PC-9 (cell line): ENCODE measurements at regions of chr7 and their contacts with region 1.

Region 1: GRCh38 chr7:32588657-32589056 is 93.4 kb downstream of the AVL9 start:
- DNase-seq: peak in 1 of 2 experiments; percentile 22
- H3K4me3 ChIP-seq: no peak overlapping the region
- H3K27ac ChIP-seq: peak overlapping the region; percentile 3; the same call in 1 of the 2 replicates
- H3K4me1 ChIP-seq: no peaks in the 10 kb centered on the region; the same call in 1 of the 2 replicates
- H3K27me3 ChIP-seq: no peaks in the 10 kb centered on the region
- CTCF ChIP-seq: no peak

Region 2: GRCh38 chr7:32506266-32507054 is 82.2 kb before region 1 on chr7:
- CTCF ChIA-PET with region 1: no interaction called
- POLR2A ChIA-PET with region 1: no interaction called
- intact Hi-C with region 1: no loop called
- DNase-seq: peak in 1 of 2 experiments; percentile 32
- H3K4me3 ChIP-seq: no peak overlapping the region
- H3K27ac ChIP-seq: no peak overlapping the region
- H3K4me1 ChIP-seq: peaks cover 11% of the 10 kb centered on the region
- H3K27me3 ChIP-seq: no peaks in the 10 kb centered on the region
- CTCF ChIP-seq: no peak

Region 3: DNA sequence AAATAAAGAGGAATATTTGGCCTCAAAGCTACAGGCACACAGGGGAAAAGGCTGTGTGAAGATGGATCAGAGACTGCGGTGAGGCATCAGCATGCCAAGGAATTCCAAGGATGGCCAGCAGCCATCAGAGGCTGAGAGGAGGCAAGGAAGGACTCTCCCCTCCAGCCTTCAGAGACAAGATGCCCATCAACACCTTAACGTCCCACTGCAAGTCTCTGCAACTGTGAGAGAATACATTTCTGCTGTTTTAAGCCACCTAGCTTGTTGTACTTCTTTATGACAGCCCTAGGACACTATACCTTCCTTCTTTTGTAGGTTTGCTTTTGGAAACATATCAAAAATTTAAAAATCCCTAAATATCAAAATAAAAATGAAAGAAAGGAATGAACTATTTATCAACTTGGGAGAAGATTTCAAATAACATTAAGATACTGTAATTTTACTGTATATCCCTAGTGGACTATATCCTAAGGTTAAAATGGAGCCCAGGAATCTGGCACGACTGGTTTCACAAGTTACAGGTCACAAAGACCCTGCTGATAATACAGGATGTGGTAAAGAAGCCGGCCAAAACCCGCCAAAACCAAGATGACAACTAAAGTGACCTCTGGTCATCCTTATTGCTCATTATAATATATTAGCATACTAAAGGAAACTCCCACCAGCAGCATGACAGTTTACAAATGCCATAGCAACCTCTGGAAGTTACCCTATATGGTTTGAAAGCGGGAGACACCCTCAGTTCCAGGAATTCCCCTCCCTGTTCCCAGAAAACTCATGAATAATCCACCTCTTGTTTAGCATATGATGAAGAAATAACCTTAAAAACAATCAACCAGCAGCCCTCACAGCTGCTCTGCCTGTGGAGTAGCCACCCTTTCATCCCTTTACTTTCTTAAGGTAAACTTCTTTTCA is 91.9 kb after region 1 on chr7:
- CTCF ChIA-PET with region 1: no interaction called
- POLR2A ChIA-PET with region 1: no interaction called
- intact Hi-C with region 1: loop called (anchors 5 kb)
- DNase-seq: peak; percentile 89 to 99
- H3K4me3 ChIP-seq: peak overlapping the region; percentile 27
- H3K27ac ChIP-seq: peak overlapping the region; percentile 86
- H3K4me1 ChIP-seq: peaks cover 44% of the 10 kb centered on the region
- H3K27me3 ChIP-seq: no peaks in the 10 kb centered on the region
- CTCF ChIP-seq: no peak

Region 4: GRCh38 chr7:33128990-33129805 is 540.5 kb after region 1 on chr7 and contains the start of gene BBS9:
- CTCF ChIA-PET with region 1: no interaction called
- POLR2A ChIA-PET with region 1: no interaction called
- intact Hi-C with region 1: no loop called
- DNase-seq: peak; percentile 92 to 95
- H3K4me3 ChIP-seq: peak within 1 kb of the TSS; percentile 58
- H3K27ac ChIP-seq: no peak within 1 kb of the TSS
- H3K4me1 ChIP-seq: peaks cover 9% of the 10 kb centered on the region; the same call in 1 of the 2 replicates
- H3K27me3 ChIP-seq: no peaks in the 10 kb centered on the region
- CTCF ChIP-seq: no peak
- total RNA-seq, gene BBS9: 12.4 and 13.1 TPM in 2 replicates